KBM-7 (cell line): ENCODE measurements at regions of chr16 and their contacts with region 1.

Region 1: GRCh38 chr16:50397196-50397595 is 28.4 kb upstream of the BRD7 start:
- DNase-seq: no peak

Region 2: DNA sequence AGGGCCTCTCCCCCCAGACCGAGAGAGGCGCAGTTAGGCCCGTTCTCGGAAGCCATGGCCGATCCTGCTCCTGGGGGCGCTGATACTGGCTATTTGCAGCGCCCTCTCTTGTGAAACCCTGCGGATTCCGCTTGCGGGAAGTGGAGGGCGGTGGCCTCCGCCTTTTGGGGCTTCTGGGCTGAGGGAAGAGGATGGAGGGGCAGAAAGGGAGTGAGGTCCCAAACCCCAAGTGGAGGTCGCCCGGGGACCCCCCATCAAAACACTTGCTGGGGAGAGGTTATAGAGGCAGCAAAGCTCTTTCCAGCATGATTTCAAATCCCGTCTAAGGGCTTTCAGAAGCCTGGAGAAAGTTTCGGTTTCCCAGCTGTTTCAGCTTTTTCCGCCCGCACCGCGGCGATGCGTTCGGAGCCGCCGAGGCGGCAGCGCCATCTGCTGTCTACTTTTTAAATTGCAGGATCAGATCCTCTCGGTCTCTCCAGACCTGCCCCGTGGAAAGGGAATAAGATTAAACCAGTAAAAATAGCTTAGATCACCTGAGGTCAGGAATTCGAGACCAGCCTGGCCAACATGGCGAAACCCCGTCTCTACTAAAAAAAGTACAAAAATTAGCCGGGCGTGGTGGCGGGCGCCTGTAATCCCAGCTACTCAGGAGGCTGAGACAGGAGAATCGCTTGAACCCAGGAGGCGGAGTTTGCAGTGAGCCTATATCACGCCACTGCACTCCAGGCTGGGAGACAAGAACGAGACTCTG is 268.1 kb after region 1 on chr16:
- in situ Hi-C with region 1: loop called (anchors 25 kb)
- DNase-seq: peak; percentile 85

Region 3: GRCh38 chr16:50806099-50807062 is 409.2 kb after region 1 on chr16:
- in situ Hi-C with region 1: loop called (anchors 25 kb)
- DNase-seq: peak; percentile 94

Region 4: DNA sequence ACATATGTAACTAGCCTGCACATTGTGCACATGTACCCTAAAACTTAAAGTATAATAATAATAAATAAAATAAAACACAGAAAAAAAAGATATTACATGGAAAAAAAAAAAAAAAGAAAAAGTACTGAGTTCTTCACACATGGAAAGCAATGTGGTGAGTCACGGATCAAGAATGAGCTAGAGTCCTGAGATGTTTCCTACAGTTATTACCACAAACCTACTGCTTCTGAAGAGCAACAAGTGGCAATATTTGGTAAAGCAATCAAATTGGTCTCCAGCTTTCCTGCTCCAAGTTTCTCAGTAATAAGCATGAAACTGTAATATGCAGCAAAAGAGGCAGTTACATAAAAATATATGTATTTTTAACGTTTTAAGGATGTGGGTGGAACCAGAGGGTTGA is 977.1 kb after region 1 on chr16:
- in situ Hi-C with region 1: no loop called
- DNase-seq: no peak